ENCODE measurements at regions of chr4 and their contacts with region 1.

Region 1: DNA sequence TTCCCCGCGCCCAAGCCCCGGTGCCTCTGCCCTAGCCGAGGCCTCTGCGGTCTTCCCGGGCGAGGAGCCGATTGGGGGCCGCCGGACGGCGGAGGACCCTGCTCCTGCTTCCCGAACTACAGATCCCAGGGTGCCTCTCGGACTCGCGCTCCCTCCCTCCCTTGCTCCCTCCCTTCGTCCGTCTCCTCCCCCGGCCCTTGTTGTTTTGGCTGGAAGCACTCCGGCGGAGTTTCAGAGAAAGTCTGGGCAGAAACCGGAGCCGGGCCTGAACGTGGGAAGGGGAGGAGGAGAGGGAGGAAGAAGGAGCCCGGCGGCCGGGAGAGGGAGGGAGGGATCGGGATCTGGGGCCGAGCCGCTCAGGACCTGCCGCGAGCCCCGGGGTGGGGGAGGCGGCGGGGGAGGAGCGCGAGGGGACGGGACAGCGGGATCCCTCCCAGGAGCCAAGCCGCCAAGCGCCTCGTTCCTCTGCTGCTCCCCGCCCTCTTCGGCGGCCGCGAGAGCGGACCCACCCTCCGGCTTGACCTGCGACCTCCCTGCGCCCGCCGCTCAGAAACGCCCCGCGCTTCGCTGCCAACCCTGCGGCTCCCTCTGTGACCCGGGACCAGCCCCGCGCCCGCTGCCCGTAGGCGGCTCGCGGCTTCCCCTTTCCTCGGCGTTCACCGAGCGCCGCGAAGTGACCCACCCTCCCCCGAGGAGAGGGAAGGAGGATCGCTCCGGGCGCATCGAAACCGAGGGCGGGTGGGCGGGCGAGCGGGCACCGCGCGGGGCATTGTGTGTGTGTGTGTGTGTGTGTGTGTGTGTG is 496 bp upstream of the GAB1 start:
- DNase-seq: peak; percentile 76
- H3K4me3 Mint-ChIP-seq: peak overlapping the region; percentile 86
- H3K27ac Mint-ChIP-seq: no peak overlapping the region
- H3K4me1 Mint-ChIP-seq: peaks cover 8% of the 10 kb centered on the region
- H3K27me3 Mint-ChIP-seq: no peaks in the 10 kb centered on the region
- CTCF ChIP-seq: no peak

Region 2: DNA sequence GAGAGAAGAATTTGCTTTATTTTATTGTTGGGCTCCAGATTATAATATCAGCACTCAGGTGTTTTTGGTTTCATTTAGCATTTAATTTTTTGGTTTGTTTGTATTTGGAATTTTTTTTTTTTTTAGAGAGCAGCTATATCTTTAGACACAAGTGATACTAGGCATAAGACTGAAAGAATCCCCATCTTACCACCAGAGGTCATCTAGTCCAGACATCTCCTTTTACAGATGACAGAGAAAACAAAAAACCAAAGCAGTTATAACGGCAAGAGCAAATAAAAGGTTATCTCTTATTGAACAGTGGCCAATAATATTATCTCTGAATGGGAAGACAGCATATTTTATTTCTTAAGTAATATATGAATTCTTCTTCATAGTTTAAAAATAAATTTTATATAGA is 128.6 kb before region 1 on chr4:
- CTCF ChIA-PET with region 1: no interaction called
- intact Hi-C with region 1: loop called (anchors 10 kb)
- DNase-seq: no peak
- H3K4me3 Mint-ChIP-seq: no peak overlapping the region
- H3K27ac Mint-ChIP-seq: no peak overlapping the region
- H3K4me1 Mint-ChIP-seq: no peaks in the 10 kb centered on the region
- H3K27me3 Mint-ChIP-seq: no peaks in the 10 kb centered on the region
- CTCF ChIP-seq: no peak

Region 3: DNA sequence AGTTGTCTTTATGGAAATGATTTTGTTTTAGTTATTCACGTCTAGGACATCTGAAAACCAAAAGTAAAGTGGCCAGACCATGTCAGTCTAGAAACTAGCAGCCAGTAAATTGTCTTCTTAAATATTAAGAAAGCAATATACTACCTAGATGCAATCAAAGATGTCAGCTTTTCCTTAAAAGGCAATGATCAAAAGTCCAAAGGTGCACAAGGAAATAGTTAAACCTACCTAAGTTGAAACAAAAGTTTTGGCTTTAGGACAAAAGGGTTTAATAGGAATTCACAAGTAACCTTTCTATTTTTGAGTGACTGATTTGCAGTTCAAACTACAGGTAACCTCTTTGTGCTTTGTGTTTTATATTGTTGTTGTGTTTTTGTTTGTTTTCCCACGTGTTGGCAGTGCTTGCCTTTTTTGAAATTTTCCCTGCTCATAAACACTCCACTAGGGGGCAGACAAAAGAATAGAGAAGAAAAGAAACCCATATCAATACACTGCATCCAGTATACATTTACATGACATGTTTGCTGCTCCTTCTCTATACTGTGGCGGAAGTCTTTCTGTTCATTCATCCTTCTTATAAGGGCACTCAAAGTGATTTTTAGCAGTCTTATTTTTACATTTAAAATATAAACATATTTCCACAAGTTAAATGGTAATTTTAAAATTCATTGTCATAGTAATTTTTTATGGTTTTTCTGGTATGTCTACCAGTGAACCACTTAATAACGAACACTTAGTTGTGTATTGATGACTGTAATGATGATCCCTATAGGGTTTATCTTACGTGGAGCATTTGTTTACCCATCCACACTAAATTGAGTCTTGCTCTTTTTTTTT is 63.2 kb after region 1 on chr4:
- CTCF ChIA-PET with region 1: interaction called, 3 read pairs
- intact Hi-C with region 1: loop called (anchors 5 kb)
- DNase-seq: peak; percentile 17
- H3K4me3 Mint-ChIP-seq: no peak overlapping the region
- H3K27ac Mint-ChIP-seq: no peak overlapping the region
- H3K4me1 Mint-ChIP-seq: peaks cover 10% of the 10 kb centered on the region
- H3K27me3 Mint-ChIP-seq: no peaks in the 10 kb centered on the region
- CTCF ChIP-seq: peak; percentile 21